PC-9 (cell line): ENCODE measurements at regions of chr17 and their contacts with region 1.

Region 1: DNA sequence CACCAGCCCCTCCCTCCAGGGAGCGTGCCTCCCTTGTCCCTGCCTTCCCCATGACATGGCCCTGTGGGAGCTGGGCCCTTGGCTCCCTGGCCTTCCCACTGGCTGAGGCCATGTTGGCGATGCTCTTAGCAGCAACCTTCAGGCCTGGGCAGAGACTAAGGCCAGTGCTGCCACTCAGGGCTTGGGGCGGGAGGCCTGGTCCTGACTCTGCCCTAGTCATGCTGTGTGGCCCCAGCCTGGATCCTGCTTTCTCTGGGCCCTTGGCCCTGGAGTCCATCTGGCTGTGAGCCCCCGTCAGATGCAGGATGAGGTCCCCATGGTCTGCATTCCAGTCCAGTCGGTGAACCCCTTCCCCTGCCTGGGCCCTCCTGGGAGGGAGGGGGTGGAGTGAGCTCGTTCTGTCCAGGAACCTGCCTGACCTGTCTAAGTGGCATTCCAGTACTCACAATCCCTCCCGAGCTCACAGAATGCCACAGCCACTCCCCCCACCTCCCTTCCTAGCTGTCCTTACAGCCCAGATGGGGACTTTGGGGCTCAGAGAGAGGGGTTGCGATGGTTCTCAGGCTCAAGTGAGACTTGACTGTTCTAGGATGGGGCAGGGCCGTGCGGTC is 15.4 kb downstream of the SPNS2 start:
- DNase-seq: peak; percentile 92 to 93
- H3K4me3 ChIP-seq: peak overlapping the region; percentile 47; the same call in 1 of the 2 replicates
- H3K27ac ChIP-seq: peak overlapping the region; percentile 100
- H3K4me1 ChIP-seq: peaks cover 79% of the 10 kb centered on the region
- H3K27me3 ChIP-seq: no peaks in the 10 kb centered on the region
- CTCF ChIP-seq: no peak

Region 2: DNA sequence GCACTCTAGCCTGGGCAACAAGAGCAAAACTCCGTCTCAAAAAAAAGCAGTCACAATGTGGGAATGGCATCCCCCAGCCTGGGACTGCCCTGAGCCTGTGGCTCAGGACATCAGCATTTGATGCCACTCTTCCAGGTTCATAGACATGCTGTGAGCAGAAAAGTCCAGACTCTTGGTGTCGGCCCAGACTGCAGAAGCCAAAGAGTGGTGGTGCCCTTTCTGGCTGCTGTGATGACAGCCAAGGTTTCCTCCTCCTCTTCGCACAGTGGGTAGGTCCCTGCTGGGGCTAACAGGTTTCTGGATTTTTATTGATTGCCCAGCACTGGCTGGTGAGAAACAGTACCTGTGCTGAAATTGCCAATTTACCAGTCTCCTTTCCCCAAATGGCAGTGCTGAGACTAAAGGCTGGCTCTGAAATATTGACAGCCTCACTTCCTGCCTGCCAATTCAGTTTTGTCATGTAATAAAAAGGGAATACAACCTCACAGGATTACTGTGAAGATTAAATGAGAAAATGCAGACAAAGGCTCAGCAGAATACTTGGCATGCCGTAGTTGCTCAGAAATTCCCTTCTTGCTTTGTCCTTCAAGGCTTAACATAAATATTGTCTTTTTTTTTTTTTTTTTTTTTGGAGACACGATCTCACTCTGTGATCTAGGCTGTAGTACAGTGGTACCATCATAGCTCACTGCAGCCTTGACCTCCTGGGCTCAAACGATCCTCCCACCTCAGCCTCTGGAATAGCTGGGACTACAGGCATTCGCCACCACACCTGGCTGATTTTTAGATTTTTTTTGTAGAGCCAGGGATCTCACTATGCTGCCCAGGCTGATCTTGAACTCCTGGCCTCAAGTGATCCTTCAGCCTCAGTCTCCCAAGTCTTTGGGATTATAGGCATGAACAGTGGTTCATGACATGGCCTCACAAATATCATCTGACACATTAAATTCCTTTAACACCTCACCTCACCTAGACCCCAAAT is 132.1 kb before region 1 on chr17:
- CTCF ChIA-PET with region 1: no interaction called
- POLR2A ChIA-PET with region 1: no interaction called
- intact Hi-C with region 1: no loop called
- DNase-seq: no peak
- H3K4me3 ChIP-seq: no peak overlapping the region
- H3K27ac ChIP-seq: no peak overlapping the region
- H3K4me1 ChIP-seq: no peaks in the 10 kb centered on the region
- H3K27me3 ChIP-seq: no peaks in the 10 kb centered on the region
- CTCF ChIP-seq: no peak

Region 3: DNA sequence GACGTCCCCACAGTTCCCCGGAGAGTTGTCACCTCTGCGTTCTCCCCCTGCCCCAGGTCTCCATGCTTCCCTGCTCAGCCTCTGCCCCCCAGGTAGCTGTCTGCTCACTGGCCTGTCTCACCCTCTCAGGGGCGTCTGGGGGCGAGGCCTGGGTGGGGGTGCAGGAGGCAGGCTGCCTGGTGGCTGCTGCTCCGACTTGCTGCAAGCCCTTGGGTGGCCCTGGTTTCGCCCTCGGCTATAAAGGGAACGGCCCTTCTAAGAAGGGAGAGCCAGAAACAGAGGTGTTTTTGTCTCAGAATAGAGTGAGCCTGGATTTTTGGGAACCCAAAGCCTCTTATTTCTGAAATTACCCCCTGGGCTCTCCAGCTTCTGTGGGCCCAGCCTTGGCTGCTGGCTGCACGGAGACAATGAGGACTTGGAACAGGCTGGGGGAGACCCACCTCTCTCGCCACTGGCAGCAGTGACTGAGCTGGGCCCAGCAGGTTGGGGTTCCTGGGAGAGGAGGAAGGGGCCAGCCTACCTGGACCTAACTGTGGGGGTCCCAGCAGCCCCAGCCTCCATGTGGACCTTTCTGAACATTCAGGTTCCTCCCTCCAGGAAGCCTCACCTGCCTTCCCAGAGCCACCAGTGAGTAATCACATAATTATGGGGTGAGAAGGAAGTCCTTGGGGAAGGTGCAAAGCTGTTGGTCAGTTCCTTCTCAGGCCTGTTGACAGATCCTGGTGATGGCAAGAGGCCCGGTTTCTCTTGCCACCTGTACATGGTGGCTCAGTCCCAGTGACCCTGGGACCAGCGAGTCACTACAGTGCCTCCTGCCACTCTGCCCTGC is 30.9 kb before region 1 on chr17:
- CTCF ChIA-PET with region 1: no interaction called
- POLR2A ChIA-PET with region 1: interaction called, 3 read pairs
- intact Hi-C with region 1: loop called (anchors 1 kb)
- DNase-seq: peak; percentile 88 to 99
- H3K4me3 ChIP-seq: peak overlapping the region; percentile 53
- H3K27ac ChIP-seq: peak overlapping the region; percentile 96
- H3K4me1 ChIP-seq: peaks cover 75% of the 10 kb centered on the region
- H3K27me3 ChIP-seq: no peaks in the 10 kb centered on the region
- CTCF ChIP-seq: no peak

Region 4: DNA sequence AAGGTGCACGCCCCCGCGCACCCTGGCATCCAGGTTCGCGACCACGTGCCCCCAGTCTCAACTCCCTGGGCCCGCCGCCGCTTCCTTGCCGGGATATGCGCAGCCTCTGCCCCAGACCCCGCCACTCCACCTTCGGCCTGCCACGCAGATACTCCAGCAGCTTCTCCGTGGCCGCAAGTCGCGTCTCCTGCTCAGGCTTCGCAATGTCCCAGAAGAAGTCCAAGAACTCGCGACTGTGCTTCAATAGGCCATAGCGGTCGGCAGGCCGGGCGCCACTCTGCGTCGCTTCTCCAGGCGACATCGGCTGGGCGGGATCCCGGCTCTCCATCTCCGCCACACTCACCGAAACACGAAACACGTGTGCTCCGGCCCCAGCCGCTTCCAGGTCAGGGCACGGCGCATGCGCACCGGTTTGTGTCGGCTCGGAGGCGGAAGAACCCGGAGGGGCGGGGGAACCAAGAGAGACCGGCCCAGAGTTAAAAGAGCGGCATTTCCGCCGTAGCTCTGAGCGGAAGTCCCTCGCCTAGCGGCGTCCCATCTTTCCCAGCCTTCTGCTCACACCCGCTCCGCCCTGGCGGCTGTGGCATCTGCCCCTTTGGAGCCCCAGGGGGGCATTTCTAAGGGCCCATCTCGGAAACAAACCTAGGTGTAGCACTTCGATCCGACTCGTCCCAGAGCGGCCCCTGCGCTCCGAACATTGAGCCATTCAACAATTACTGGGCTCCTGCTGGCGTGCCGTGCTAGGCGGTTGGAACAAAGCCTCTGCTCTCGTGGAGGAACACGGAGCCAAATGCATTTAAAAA is 41.1 kb after region 1 on chr17 and contains the start of gene MYBBP1A:
- CTCF ChIA-PET with region 1: no interaction called
- POLR2A ChIA-PET with region 1: interaction called, 4 read pairs
- intact Hi-C with region 1: loop called (anchors 2 kb)
- DNase-seq: peak; percentile 90 to 97
- H3K4me3 ChIP-seq: peak within 1 kb of the TSS; percentile 94
- H3K27ac ChIP-seq: peak within 1 kb of the TSS; percentile 23
- H3K4me1 ChIP-seq: peaks cover 15% of the 10 kb centered on the region
- H3K27me3 ChIP-seq: no peaks in the 10 kb centered on the region
- CTCF ChIP-seq: 0 out of 2 replicates have a peak, but pooled peaks have one; percentile 26
- total RNA-seq, gene MYBBP1A: 76.3 and 89.1 TPM in 2 replicates

Region 5: GRCh38 chr17:4806777-4807604 is 292.9 kb after region 1 on chr17 and contains the start of gene PLD2:
- CTCF ChIA-PET with region 1: no interaction called
- POLR2A ChIA-PET with region 1: no interaction called
- intact Hi-C with region 1: no loop called
- DNase-seq: peak; percentile 63 to 93
- H3K4me3 ChIP-seq: peak within 1 kb of the TSS; percentile 68
- H3K27ac ChIP-seq: no peak within 1 kb of the TSS
- H3K4me1 ChIP-seq: peaks cover 37% of the 10 kb centered on the region
- H3K27me3 ChIP-seq: no peaks in the 10 kb centered on the region
- CTCF ChIP-seq: no peak
- total RNA-seq, gene PLD2: 95.5 and 116 TPM in 2 replicates